Activated naive CD4-positive, alpha-beta T cell treated with anti-CD3 and anti-CD28 coated beads for 36 hours (primary cell): ENCODE measurements at regions of chr1 and their contacts with region 1.

Region 1: DNA sequence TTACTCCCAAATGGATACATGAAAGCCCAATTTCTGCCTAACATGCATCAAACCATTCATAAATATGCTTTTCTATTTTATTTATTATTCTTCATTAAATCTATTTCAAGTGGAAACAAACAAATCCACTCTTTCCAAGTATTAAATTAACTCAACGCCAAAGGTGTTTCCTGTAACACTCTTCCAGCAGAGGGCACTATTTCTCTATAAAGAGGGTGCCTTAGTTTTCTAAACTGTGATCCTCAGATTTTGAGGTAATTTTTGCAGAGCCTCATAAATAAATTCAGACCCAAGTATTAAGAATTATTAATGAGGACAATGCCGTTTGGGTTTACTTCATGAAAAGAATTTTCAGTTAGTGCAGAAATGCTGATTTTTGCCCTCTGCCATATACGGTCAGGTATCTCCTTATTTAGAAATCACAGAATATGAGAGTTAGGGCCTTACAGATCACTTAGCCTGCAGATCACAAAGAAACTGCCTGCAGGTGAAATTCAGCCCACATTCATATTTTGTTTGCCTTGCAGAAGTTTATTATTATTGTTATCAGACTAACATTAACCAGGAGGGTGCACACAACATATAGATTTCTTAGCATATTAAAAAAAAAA is 40.1 kb upstream of the MYSM1 start:
- DNase-seq: peak; percentile 15
- H3K4me3 Mint-ChIP-seq: no peak overlapping the region
- H3K27ac Mint-ChIP-seq: no peak overlapping the region
- H3K4me1 Mint-ChIP-seq: no peaks in the 10 kb centered on the region
- H3K27me3 Mint-ChIP-seq: no peaks in the 10 kb centered on the region

Region 2: GRCh38 chr1:58652651-58653184 is 87.2 kb before region 1 on chr1:
- CTCF ChIA-PET with region 1: no interaction called
- intact Hi-C with region 1: no loop called
- DNase-seq: peak; percentile 74
- H3K4me3 Mint-ChIP-seq: no peak overlapping the region
- H3K27ac Mint-ChIP-seq: no peak overlapping the region
- H3K4me1 Mint-ChIP-seq: peaks cover 17% of the 10 kb centered on the region
- H3K27me3 Mint-ChIP-seq: no peaks in the 10 kb centered on the region

Region 3: DNA sequence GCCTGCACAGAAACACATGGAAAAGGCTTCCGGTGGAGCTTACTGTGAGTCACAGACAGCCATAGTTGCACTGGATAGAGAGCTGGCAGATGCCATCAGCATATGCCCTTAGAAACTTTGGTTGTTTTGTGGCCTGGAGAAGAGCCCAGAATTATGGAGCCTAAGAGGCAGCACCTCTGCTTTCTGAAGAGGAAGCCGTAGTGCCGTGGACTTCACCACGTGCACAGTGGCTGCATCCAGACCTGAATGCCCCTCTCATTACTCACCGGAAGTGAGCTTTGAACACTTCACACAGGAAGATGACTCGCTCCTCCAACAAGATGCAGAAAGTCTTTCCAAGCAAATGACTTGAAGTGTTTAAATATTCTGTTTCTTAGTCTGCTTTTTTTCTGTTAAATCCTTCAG is 15.5 kb after region 1 on chr1:
- CTCF ChIA-PET with region 1: interaction called, 4 read pairs
- intact Hi-C with region 1: loop called (anchors 1 kb)
- DNase-seq: peak; percentile 86
- H3K4me3 Mint-ChIP-seq: no peak overlapping the region
- H3K27ac Mint-ChIP-seq: peak overlapping the region; percentile 71
- H3K4me1 Mint-ChIP-seq: peaks cover 41% of the 10 kb centered on the region
- H3K27me3 Mint-ChIP-seq: no peaks in the 10 kb centered on the region

Region 4: GRCh38 chr1:58768971-58769808 is 29.2 kb after region 1 on chr1:
- CTCF ChIA-PET with region 1: interaction called, 5 read pairs
- intact Hi-C with region 1: loop called (anchors 1 kb)
- DNase-seq: peak; percentile 71
- H3K4me3 Mint-ChIP-seq: no peak overlapping the region
- H3K27ac Mint-ChIP-seq: no peak overlapping the region
- H3K4me1 Mint-ChIP-seq: peaks cover 12% of the 10 kb centered on the region
- H3K27me3 Mint-ChIP-seq: no peaks in the 10 kb centered on the region

Region 5: GRCh38 chr1:59759156-59759925 is 1019.4 kb after region 1 on chr1:
- CTCF ChIA-PET with region 1: interaction called, 8 read pairs
- intact Hi-C with region 1: loop called (anchors 1 kb)
- DNase-seq: peak; percentile 83
- H3K4me3 Mint-ChIP-seq: peak overlapping the region; percentile 47
- H3K27ac Mint-ChIP-seq: peak overlapping the region; percentile 53
- H3K4me1 Mint-ChIP-seq: peaks cover 4% of the 10 kb centered on the region
- H3K27me3 Mint-ChIP-seq: no peaks in the 10 kb centered on the region

Region 6: DNA sequence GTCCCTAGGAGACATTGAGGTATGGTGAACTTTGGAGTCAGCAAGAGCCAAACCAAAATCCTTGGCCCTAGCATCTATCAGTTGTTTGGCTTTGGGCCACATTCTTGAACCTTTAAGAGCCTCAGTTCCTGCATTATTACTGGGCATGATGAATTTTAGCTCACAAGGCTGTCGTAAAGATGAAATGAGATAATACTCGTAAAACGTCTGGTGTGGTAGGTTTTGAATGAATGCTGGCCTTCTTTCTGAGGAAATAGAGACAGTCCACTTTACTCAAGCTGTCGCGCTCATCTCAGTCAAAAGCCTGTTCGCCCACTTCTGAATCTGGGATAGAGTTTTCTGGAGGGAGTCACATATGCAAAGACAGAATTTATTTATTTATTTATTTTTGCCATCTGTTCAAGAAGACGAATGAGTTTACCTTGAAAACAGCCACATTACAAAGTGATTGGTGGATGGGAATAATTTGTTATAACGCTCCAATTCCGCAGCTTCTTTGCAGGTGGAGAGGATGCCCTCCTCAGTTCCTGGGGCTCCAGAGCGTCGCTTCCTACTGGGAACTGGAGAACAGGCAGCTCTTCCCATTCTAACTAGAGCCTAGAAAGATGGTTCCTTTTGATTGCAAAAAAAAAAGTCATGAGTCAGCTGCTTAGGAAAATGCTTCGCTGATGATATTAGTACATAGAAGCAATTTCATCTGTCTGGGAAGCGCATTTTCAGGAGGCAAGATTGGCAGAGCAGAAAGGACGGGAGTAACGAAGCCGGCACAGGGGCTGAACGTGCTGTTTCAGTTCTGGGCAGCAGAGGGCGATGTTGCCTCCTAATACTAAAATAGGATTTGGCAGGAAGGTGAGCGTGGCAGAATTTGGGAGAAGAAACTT is 1236.5 kb after region 1 on chr1:
- CTCF ChIA-PET with region 1: no interaction called
- intact Hi-C with region 1: no loop called
- DNase-seq: peak; percentile 71
- H3K4me3 Mint-ChIP-seq: no peak overlapping the region
- H3K27ac Mint-ChIP-seq: no peak overlapping the region
- H3K4me1 Mint-ChIP-seq: peaks cover under 1% of the 10 kb centered on the region
- H3K27me3 Mint-ChIP-seq: peaks cover 18% of the 10 kb centered on the region